ENCODE measurements at regions of chr1 and their contacts with region 1.

Region 1: GRCh38 chr1:15777909-15778707 is 19.5 kb downstream of the FBLIM1 start:
- DNase-seq: no peak
- H3K4me3 ChIP-seq: no peak overlapping the region
- H3K27ac ChIP-seq: no peak overlapping the region
- H3K4me1 ChIP-seq: no peaks in the 10 kb centered on the region
- H3K27me3 ChIP-seq: peaks cover 0 to 2% (median 0%) of the 10 kb centered on the region in 5 experiments

Region 2: GRCh38 chr1:15760520-15761211 is 17.4 kb before region 1 on chr1:
- CTCF ChIA-PET with region 1: no interaction called
- POLR2A ChIA-PET with region 1: no interaction called
- DNase-seq: no peak
- H3K4me3 ChIP-seq: no peak overlapping the region
- H3K27ac ChIP-seq: no peak overlapping the region
- H3K4me1 ChIP-seq: peaks cover 0 to 21% (median 12%) of the 10 kb centered on the region in 4 experiments
- H3K27me3 ChIP-seq: peaks cover 0 to 72% (median 34%) of the 10 kb centered on the region in 5 experiments

Region 3: DNA sequence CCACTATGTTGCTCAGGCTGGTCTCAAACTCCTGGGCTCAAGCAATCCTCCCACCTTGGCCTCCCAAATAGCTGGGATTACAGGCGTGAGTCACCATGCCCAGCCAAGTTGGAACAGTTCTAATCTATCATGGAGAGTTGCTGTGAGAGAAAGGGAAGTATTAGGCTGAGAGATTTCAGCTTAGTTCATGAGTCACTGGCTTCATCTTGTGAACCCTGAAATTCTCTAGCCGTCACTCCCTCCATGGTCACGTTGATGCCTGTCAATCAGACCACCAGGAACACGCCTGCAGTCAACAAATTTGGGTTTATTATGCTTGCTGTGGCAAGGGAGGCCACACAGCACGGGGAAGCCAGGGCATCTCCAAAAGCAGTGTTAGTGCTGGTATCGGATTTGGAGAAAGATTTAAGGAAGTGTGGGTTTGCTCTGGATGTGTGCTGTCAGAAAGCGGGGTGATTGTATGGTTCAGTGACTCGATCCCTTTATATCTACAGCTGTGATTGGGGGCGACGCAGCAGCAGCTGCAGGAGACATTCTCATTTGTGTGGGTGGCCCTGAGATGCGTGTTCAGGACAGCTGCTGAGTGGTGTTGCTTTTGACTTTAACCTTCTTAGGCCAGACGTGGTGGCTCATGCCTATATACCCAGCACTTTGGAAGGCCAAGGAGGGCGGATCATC is 10.7 kb after region 1 on chr1:
- CTCF ChIA-PET with region 1: interaction called, 18 read pairs
- POLR2A ChIA-PET with region 1: no interaction called
- DNase-seq: peak; percentile 21 to 63 (median 51)
- H3K4me3 ChIP-seq: no peak overlapping the region
- H3K27ac ChIP-seq: no peak overlapping the region
- H3K4me1 ChIP-seq: no peaks in the 10 kb centered on the region
- H3K27me3 ChIP-seq: no peaks in the 10 kb centered on the region

Region 4: DNA sequence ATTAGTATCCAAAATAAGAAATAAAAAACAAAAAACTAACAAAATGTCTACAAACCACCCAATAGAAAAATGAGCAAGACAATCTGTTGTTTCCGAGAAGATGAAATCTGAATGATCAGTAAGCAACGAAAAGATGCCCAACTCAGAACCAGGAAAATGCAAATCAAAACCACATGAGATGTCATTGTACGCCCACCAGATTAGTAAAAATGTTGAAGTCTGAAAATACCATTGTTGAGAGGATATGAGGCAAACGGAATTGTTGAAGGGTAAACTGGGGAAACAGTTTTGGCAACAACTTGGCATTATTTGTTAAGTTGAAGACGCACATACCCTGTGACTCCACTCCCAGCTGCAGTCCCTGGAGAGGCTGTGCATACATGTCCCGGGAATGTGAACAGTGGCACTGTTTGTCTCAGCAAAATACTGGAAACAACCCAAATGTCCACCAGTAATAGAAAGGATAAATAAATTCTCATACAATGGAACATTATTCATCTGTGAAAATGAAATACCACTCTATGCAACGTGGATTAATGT is 187.2 kb after region 1 on chr1:
- CTCF ChIA-PET with region 1: no interaction called
- POLR2A ChIA-PET with region 1: no interaction called
- DNase-seq: no peak
- H3K4me3 ChIP-seq: no peak overlapping the region
- H3K27ac ChIP-seq: peak overlapping the region in 1 of 2 experiments; percentile 63
- H3K4me1 ChIP-seq: peaks cover 5 to 21% (median 17%) of the 10 kb centered on the region in 4 experiments
- H3K27me3 ChIP-seq: no peaks in the 10 kb centered on the region

Measured in common myeloid progenitor, CD34-positive (primary cell).